HepG2 (cell line): ENCODE measurements at regions of chr18 and their contacts with region 1.

Region 1: DNA sequence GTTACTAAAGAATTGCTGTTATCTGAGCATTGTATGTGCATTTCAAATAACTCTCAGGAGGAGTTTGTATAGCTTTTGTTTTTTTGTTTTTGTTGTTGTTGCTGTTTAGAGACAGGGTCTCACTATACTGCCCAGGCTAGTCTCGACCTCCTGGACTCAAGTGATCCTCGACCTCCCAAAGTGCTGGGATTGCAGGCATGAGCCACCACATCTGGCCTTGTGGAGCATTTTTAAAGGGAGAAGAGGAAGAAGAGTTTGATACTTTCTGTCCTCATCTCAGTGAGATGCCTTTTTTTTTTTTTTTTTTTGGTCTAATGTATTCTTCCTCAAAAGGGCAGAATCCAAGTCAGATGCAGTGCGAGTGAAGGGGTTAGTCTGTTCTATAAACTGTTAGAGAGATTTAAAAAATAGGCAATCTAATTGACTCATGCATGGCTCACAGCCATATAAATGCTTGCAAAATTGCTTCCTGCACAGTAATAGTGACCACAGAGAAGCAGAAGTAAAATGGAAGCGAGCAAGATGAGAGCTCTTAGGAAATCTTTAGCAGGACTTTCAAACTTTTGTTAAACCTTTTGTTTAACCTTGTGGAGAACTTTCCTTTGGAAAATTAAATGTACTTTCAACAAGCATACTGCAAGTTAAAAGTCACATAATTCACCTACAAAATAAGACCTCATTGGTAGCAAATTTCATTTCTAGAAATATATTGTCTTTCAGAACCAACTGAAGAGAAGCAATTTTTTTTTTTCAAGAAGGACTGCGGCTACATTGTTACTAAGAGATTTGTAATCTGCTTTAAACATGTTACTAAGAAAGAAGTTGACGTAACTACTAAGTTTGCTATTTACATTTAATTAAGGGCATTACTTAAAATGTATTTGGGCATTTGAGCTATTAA is 52.3 kb upstream of the ROCK1 start:
- DNase-seq: no peak
- ATAC-seq: no peak
- H3K4me3 ChIP-seq: no peak overlapping the region
- H3K27ac ChIP-seq: no peak overlapping the region
- H3K4me1 ChIP-seq: no peaks in the 10 kb centered on the region
- H3K27me3 ChIP-seq: no peaks in the 10 kb centered on the region
- CTCF ChIP-seq: no peak
- EP300 ChIP-seq: no peak
- POLR2A ChIP-seq: no peak
- RAD21 ChIP-seq: no peak

Region 2: DNA sequence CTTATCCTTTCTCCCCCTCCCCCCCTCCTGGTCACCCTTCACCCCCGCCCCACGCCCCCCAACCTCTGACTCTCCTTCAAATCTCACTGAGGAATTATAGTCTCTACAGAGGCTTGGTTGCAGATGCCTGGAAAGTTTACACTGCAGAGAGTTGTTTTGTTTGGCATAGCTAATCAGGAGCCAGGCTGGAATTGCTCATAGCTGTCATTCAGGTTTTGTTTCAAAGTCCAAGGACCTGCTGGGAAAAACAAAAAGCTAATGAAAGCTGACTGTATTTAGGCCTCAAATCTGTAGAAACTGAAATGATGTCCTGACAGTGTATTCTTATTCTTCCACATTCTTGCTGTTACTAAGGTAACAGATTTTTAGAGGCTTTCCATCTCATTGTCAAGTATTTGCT is 100.8 kb after region 1 on chr18:
- CTCF ChIA-PET with region 1: no interaction called
- POLR2A ChIA-PET with region 1: no interaction called
- in situ Hi-C with region 1: loop called (anchors 25 kb)
- intact Hi-C with region 1: no loop called
- DNase-seq: peak; percentile 89
- ATAC-seq: peak; percentile 99
- H3K4me3 ChIP-seq: peak overlapping the region in 1 of 3 experiments; percentile 7; a peak in 1 of 6 replicates
- H3K27ac ChIP-seq: peak overlapping the region; percentile 66
- H3K4me1 ChIP-seq: peaks cover 52% of the 10 kb centered on the region
- H3K27me3 ChIP-seq: no peaks in the 10 kb centered on the region
- CTCF ChIP-seq: no peak
- EP300 ChIP-seq: peak in 1 of 2 experiments; percentile 72; a peak in 2 of 4 replicates
- POLR2A ChIP-seq: no peak
- RAD21 ChIP-seq: no peak